ENCODE measurements at regions of chr3 and their contacts with region 1.

Region 1: GRCh38 chr3:9067352-9067975 is 104.2 kb upstream of the RAD18 start:
- DNase-seq: peak in 6 of 7 donors; percentile 35 to 84 (median 55)
- H3K4me3 ChIP-seq: no peak overlapping the region
- H3K27ac ChIP-seq: no peak overlapping the region
- H3K4me1 ChIP-seq: peaks cover 0 to 10% of the 10 kb centered on the region in 2 donors
- H3K27me3 ChIP-seq: no peaks in the 10 kb centered on the region
- CTCF ChIP-seq: peak; percentile 81 to 90 (median 88)
- POLR2A ChIP-seq: no peak

Region 2: DNA sequence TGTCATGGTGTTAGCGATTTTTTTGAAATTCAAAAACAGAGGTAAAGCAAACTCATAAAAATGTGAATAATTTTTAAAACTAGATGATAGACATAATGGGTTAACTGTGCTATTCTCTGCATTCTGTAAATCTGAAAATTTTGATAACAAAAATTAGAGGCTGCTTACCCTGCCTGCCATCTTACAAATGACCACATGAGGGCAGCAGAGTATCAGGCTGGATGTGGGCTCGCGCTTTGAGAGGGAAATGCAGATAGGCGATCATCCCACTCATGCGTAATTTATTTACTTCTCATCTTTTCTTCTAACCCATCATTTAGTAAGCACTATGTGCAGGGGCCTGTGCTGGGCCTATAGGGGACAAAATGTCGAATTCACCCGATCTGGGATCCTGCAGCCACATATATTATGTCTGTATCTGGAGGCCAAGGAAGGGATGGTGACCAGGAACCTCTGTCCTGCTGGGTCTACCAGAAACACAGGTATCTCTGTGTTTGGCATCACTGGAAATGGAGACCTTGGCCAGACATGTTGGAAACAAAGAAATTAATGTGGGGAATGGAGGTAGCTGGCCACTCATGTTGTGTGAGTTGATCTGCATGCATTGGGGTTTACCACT is 96.4 kb before region 1 on chr3:
- intact Hi-C with region 1: loop called in 1 of 2 experiments (anchors 5 kb)
- DNase-seq: peak; percentile 42 to 90 (median 73)
- H3K4me3 ChIP-seq: no peak overlapping the region
- H3K27ac ChIP-seq: no peak overlapping the region
- H3K4me1 ChIP-seq: no peaks in the 10 kb centered on the region
- H3K27me3 ChIP-seq: no peaks in the 10 kb centered on the region
- CTCF ChIP-seq: peak; percentile 96 to 100 (median 98)
- POLR2A ChIP-seq: no peak

Region 3: GRCh38 chr3:8987645-8988383 is 79.7 kb before region 1 on chr3:
- intact Hi-C with region 1: loop called (anchors 2 to 5 kb)
- DNase-seq: peak; percentile 61 to 89 (median 72)
- H3K4me3 ChIP-seq: no peak overlapping the region
- H3K27ac ChIP-seq: no peak overlapping the region
- H3K4me1 ChIP-seq: no peaks in the 10 kb centered on the region
- H3K27me3 ChIP-seq: no peaks in the 10 kb centered on the region
- CTCF ChIP-seq: peak; percentile 67 to 83 (median 81)
- POLR2A ChIP-seq: no peak

Region 4: GRCh38 chr3:9111417-9111816 is 44.0 kb after region 1 on chr3:
- intact Hi-C with region 1: no loop called
- DNase-seq: peak in 1 of 7 donors; percentile 49
- H3K4me3 ChIP-seq: no peak overlapping the region
- H3K27ac ChIP-seq: peak overlapping the region in 1 of 5 donors; percentile 57
- H3K4me1 ChIP-seq: peaks cover 0 to 13% of the 10 kb centered on the region in 2 donors
- H3K27me3 ChIP-seq: no peaks in the 10 kb centered on the region
- CTCF ChIP-seq: no peak
- POLR2A ChIP-seq: no peak

Measured in adrenal gland (tissue), 19 donors.